B cell (primary cell): ENCODE measurements at regions of chr1 and their contacts with region 1.

Region 1: DNA sequence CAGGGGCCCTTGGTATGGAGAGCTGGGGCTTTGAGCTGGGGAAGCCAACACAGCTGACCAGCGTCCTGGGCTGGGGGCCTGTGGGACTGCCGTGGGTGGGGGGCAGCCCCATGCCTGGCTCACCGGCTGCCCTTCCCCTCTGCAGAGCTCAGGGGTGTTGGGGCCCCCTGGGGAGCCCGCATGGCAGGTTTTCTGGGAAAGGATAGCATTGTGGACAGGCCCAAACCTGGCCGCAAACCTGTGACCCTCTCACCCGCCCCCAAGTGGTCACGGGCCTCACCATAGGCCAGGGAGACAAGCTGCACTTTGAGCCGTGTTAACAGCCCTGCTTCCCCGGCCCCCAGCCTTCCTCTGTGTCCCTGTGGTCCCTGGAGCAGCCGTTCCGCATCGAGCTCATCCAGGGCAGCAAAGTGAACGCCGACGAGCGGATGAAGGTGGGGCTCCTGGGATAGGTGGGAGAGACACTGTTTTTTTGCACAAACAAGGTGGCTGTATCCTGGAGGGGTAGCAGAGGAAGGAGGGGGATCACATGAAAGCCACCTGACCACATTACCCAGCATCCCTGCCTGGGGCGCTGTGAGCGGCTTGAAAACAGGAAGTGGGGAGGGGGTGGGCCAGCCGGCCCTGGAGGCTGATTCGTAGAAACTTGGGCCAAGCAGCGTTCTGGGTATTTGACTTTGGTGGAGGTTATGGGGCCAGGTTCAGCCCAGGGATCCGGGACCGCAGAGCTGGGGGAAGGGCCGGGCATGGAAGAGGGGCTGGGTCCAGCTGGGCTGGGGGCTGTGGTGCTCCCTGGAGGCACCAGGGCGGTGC is 65.9 kb downstream of the PIK3CD start:
- DNase-seq: peak; percentile 94
- ATAC-seq: peak; percentile 85
- H3K4me3 ChIP-seq: peak overlapping the region in 4 of 5 experiments; percentile 38 to 61 (median 50)
- H3K4me3 Mint-ChIP-seq: peak overlapping the region; percentile 81
- H3K27ac ChIP-seq: peak overlapping the region; percentile 90 to 96
- H3K27ac Mint-ChIP-seq: peak overlapping the region; percentile 95
- H3K4me1 ChIP-seq: peaks cover 54 to 69% of the 10 kb centered on the region in 2 donors
- H3K4me1 Mint-ChIP-seq: peaks cover 38% of the 10 kb centered on the region
- H3K27me3 ChIP-seq: no peaks in the 10 kb centered on the region
- H3K27me3 Mint-ChIP-seq: no peaks in the 10 kb centered on the region
- CTCF ChIP-seq: peak; percentile 12

Region 2: DNA sequence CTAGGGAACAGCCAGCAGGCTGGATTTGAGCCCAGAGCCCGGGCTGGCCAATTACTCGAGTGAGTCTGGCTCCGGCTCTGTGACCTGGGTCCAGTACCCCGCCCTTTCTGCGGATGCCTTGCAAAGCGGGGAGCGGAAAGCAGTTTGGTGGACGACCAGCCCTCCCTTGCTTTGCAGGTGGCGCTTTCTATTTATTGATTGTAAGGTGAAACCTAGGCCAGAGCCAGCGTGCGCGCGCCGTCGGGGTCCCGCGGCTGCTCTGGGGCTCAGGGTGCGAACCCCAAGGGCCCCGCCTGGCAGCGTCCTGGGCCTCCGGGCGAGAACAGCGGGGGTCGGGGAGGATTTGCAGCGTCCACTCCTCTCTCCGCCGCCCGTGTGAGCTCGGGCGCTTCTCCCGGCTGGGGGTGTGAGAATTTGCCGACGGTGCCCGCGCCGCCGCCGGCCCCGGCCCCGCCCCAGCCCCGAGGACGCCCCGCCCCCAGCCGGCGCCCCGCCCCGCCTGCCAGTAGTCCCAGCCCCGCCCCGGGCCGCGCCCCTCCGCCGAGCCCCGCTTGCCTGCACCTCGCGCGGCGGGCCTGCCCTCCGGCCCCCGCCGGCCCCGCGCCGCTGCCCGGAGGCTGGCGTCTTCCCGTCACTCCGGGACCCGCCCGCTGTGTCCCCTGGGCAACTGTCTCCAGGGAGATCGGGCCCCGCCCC is 28.2 kb before region 1 on chr1:
- CTCF ChIA-PET with region 1: interaction called, 5 read pairs
- POLR2A ChIA-PET with region 1: interaction called, 7 read pairs
- intact Hi-C with region 1: loop called (anchors 2 kb)
- DNase-seq: peak; percentile 81
- ATAC-seq: peak; percentile 83
- H3K4me3 ChIP-seq: peak overlapping the region; percentile 34 to 68 (median 59)
- H3K4me3 Mint-ChIP-seq: peak overlapping the region; percentile 85
- H3K27ac ChIP-seq: peak overlapping the region in 1 of 2 donors; percentile 47
- H3K27ac Mint-ChIP-seq: peak overlapping the region; percentile 50
- H3K4me1 ChIP-seq: peaks cover 59 to 63% of the 10 kb centered on the region in 2 donors
- H3K4me1 Mint-ChIP-seq: peaks cover 64% of the 10 kb centered on the region
- H3K27me3 ChIP-seq: no peaks in the 10 kb centered on the region
- H3K27me3 Mint-ChIP-seq: no peaks in the 10 kb centered on the region
- CTCF ChIP-seq: no peak

Region 3: DNA sequence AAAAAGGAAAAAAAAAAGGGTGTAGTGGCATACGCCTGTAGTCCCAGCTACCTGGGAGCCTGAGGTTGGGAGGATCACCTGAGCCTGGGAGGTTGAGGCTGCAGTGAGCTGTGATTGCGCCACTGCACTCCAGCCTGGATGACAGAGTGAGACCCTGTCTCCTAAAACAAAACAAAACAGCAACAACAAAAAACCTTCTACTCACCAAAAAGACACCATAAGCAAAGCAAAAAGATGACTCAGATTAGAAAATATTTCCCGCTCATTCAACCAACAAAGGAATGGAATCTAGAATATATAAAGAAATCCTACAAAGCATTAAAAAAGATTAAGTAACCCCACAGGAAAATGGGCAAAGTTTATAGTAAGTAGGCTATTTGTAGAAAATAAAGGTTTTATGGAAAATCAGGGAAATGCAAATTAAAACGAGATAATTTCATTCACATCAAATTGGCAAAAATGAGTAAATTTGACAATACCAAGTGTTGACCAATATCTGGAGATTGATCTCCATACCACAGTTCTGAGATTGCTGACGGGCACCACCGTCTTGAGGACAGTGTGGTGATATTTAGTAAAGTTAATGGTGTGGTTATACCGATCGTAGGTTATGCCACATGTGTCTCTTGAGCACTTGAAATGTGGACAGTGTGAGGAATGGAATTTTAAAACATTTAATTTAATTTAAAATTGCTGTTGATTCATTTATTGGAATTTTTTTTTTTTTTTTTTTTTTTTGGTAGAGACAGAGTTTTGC is 11.9 kb before region 1 on chr1:
- CTCF ChIA-PET with region 1: interaction called, 37 read pairs
- POLR2A ChIA-PET with region 1: interaction called, 4 read pairs
- intact Hi-C with region 1: no loop called
- DNase-seq: no peak
- ATAC-seq: no peak
- H3K4me3 ChIP-seq: no peak overlapping the region
- H3K4me3 Mint-ChIP-seq: no peak overlapping the region
- H3K27ac ChIP-seq: peak overlapping the region in 1 of 2 donors; percentile 7
- H3K27ac Mint-ChIP-seq: peak overlapping the region; percentile 27
- H3K4me1 ChIP-seq: peaks cover 38 to 50% of the 10 kb centered on the region in 2 donors
- H3K4me1 Mint-ChIP-seq: peaks cover 56% of the 10 kb centered on the region
- H3K27me3 ChIP-seq: no peaks in the 10 kb centered on the region
- H3K27me3 Mint-ChIP-seq: no peaks in the 10 kb centered on the region
- CTCF ChIP-seq: no peak

Region 4: GRCh38 chr1:9766759-9767442 is 49.5 kb after region 1 on chr1:
- CTCF ChIA-PET with region 1: no interaction called
- POLR2A ChIA-PET with region 1: interaction called, 10 read pairs
- intact Hi-C with region 1: no loop called
- DNase-seq: no peak
- ATAC-seq: no peak
- H3K4me3 ChIP-seq: no peak overlapping the region
- H3K4me3 Mint-ChIP-seq: no peak overlapping the region
- H3K27ac ChIP-seq: no peak overlapping the region
- H3K27ac Mint-ChIP-seq: no peak overlapping the region
- H3K4me1 ChIP-seq: no peaks in the 10 kb centered on the region
- H3K4me1 Mint-ChIP-seq: peaks cover 1% of the 10 kb centered on the region
- H3K27me3 ChIP-seq: no peaks in the 10 kb centered on the region
- H3K27me3 Mint-ChIP-seq: no peaks in the 10 kb centered on the region
- CTCF ChIP-seq: no peak